CD4-positive, alpha-beta T cell (primary cell): ENCODE measurements at regions of chr3 and their contacts with region 1.

Region 1: GRCh38 chr3:102229062-102229655 is 205.7 kb upstream of the ZPLD1 start:
- DNase-seq: peak; percentile 51 to 88 (median 72)
- ATAC-seq: peak; percentile 92
- H3K4me3 ChIP-seq: no peak overlapping the region
- H3K4me3 Mint-ChIP-seq: no peak overlapping the region
- H3K27ac ChIP-seq: no peak overlapping the region
- H3K27ac Mint-ChIP-seq: no peak overlapping the region
- H3K4me1 ChIP-seq: peaks cover 3% of the 10 kb centered on the region
- H3K4me1 Mint-ChIP-seq: peaks cover 17% of the 10 kb centered on the region
- H3K27me3 ChIP-seq: no peaks in the 10 kb centered on the region
- H3K27me3 Mint-ChIP-seq: no peaks in the 10 kb centered on the region
- CTCF ChIP-seq: peak; percentile 93

Region 2: GRCh38 chr3:101518421-101518871 is 710.7 kb before region 1 on chr3:
- CTCF ChIA-PET with region 1: no interaction called
- POLR2A ChIA-PET with region 1: no interaction called
- intact Hi-C with region 1: no loop called
- DNase-seq: peak in 12 of 14 experiments; percentile 15 to 90 (median 36)
- ATAC-seq: peak; percentile 82
- H3K4me3 ChIP-seq: peak overlapping the region; percentile 20
- H3K4me3 Mint-ChIP-seq: peak overlapping the region; percentile 46
- H3K27ac ChIP-seq: peak overlapping the region; percentile 82 to 94
- H3K27ac Mint-ChIP-seq: peak overlapping the region; percentile 97
- H3K4me1 ChIP-seq: peaks cover 50% of the 10 kb centered on the region
- H3K4me1 Mint-ChIP-seq: peaks cover 58% of the 10 kb centered on the region
- H3K27me3 ChIP-seq: no peaks in the 10 kb centered on the region
- H3K27me3 Mint-ChIP-seq: no peaks in the 10 kb centered on the region
- CTCF ChIP-seq: no peak

Region 3: DNA sequence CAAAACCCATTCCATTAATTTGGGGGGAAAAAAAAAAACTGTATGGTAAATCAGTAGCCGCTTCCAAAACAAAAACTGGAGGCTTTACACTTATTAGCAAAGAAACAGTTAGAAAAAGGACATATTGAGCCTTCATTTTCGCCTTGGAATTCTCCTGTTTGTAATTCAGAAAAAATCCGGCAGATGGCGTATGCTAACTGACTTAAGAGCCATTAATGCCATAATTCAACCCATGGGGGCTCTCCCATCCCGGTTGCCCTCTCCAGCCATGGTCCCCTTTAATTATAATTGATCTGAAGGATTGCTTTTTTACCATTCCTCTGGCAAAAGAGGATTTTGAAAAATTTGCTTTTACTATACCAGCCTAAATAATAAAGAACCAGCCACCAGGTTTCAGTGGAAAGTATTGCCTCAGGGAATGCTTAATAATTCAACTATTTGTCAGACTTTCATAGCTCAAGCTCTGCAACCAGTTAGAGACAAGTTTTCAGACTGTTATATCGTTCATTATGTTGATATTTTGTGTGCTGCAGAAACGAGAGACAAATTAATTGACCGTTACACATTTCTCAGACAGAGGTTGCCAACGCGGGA is 533.3 kb before region 1 on chr3:
- CTCF ChIA-PET with region 1: no interaction called
- POLR2A ChIA-PET with region 1: no interaction called
- intact Hi-C with region 1: loop called (anchors 1 to 2 kb)
- DNase-seq: peak in 5 of 14 experiments; percentile 34 to 80 (median 72)
- ATAC-seq: no peak
- H3K4me3 ChIP-seq: no peak overlapping the region
- H3K4me3 Mint-ChIP-seq: no peak overlapping the region
- H3K27ac ChIP-seq: no peak overlapping the region
- H3K27ac Mint-ChIP-seq: no peak overlapping the region
- H3K4me1 ChIP-seq: no peaks in the 10 kb centered on the region
- H3K4me1 Mint-ChIP-seq: no peaks in the 10 kb centered on the region
- H3K27me3 ChIP-seq: no peaks in the 10 kb centered on the region
- H3K27me3 Mint-ChIP-seq: no peaks in the 10 kb centered on the region
- CTCF ChIP-seq: peak; percentile 93

Region 4: DNA sequence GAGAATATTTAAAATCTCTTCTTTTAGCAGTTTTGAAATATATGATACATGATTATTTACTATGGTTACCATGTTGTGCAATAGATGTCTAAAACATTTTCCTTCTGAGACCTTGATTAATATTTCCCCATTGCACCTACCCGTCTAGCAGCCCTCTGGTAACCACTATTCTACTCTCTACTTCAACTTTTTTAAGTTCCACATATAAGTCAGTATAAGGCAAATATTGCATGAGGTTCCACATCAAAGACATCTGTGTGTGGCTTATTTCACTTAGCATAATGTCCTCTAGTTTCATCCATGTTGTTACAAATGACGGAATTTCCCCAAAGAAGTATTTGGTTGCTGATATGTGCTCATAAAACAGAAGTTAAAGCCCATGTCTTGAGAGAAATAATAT is 409.4 kb before region 1 on chr3:
- CTCF ChIA-PET with region 1: interaction called, 8 read pairs
- POLR2A ChIA-PET with region 1: interaction called, 11 read pairs
- intact Hi-C with region 1: no loop called
- DNase-seq: peak in 2 of 14 experiments; percentile 43 to 53
- ATAC-seq: no peak
- H3K4me3 ChIP-seq: no peak overlapping the region
- H3K4me3 Mint-ChIP-seq: no peak overlapping the region
- H3K27ac ChIP-seq: no peak overlapping the region
- H3K27ac Mint-ChIP-seq: no peak overlapping the region
- H3K4me1 ChIP-seq: peaks cover under 1% of the 10 kb centered on the region
- H3K4me1 Mint-ChIP-seq: peaks cover 30% of the 10 kb centered on the region
- H3K27me3 ChIP-seq: no peaks in the 10 kb centered on the region
- H3K27me3 Mint-ChIP-seq: no peaks in the 10 kb centered on the region
- CTCF ChIP-seq: no peak